Transverse colon (tissue), 4 donors: ENCODE measurements at regions of chr4 and their contacts with region 1.

Region 1: GRCh38 chr4:145481164-145481941 is at the start of gene SMAD1:
- DNase-seq: peak; percentile 86
- H3K4me3 ChIP-seq: peak within 1 kb of the TSS; percentile 80 to 99 (median 94)
- H3K27ac ChIP-seq: peak within 1 kb of the TSS; percentile 94 to 100 (median 98)
- H3K4me1 ChIP-seq: peaks cover 0 to 42% (median 16%) of the 10 kb centered on the region in 4 donors
- H3K27me3 ChIP-seq: no peaks in the 10 kb centered on the region
- CTCF ChIP-seq: no peak
- EP300 ChIP-seq: no peak
- POLR2A ChIP-seq: peak; percentile 77
- total RNA-seq, gene SMAD1: 42.9 to 65.1 (median 46.5) TPM

Region 2: GRCh38 chr4:143711543-143712154 is 1769.7 kb before region 1 on chr4:
- in situ Hi-C with region 1: no loop called
- intact Hi-C with region 1: no loop called
- DNase-seq: no peak
- H3K4me3 ChIP-seq: no peak overlapping the region
- H3K27ac ChIP-seq: no peak overlapping the region
- H3K4me1 ChIP-seq: no peaks in the 10 kb centered on the region
- H3K27me3 ChIP-seq: no peaks in the 10 kb centered on the region
- CTCF ChIP-seq: no peak
- EP300 ChIP-seq: no peak
- POLR2A ChIP-seq: no peak

Region 3: DNA sequence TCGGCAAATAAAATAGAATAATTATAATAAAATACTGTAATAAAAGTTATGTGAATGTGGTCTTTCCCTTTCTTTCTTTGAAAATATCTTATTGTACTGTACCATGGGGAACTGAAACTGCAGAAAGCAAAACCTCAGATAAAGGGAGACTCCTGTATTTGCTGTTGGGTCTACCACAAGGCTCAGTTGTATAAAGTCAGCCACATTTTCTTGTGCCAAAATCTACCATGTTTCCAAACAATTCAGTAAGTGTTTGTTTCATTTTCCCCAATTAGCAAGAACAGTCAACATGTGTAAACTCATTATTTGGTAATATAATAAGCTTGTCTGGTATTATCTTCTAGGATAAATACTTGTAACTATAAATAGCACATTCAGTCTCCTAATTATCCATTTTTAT is 286.2 kb before region 1 on chr4:
- in situ Hi-C with region 1: no loop called
- intact Hi-C with region 1: no loop called
- DNase-seq: no peak
- H3K4me3 ChIP-seq: no peak overlapping the region
- H3K27ac ChIP-seq: no peak overlapping the region
- H3K4me1 ChIP-seq: peaks cover 0 to 4% (median 0%) of the 10 kb centered on the region in 4 donors
- H3K27me3 ChIP-seq: no peaks in the 10 kb centered on the region
- CTCF ChIP-seq: no peak
- EP300 ChIP-seq: no peak
- POLR2A ChIP-seq: no peak

Region 4: DNA sequence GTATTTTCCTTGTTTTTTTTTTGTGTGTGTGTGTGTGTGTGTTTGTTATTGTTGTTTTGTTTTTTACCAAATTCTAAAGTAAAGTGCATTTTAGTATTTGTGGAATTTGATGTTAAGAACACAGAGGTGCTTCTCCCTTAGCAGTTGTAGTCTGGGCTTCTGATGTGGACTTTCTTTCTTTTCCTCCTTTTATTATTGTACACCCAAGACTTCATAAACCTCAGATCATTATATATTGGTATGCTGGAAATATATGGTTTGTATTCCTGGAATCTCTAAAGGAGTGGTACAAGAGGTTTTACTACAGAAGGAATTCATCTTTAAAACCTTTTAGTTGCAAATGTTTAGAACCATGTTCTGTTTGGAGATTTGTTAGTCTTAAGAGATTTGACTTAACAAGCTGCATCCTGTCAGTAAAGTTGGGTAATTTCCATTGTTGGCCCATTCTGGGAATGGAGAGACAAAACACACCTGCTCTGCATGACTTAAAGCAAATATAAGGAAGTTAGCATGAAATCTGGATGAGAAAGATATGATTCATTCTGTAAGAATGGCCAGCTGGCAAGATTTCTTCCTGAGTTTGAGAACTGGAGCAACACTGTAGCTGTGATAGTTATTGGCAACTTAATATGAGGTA is 64.3 kb after region 1 on chr4:
- in situ Hi-C with region 1: no loop called
- intact Hi-C with region 1: loop called (anchors 5 kb)
- DNase-seq: peak; percentile 19
- H3K4me3 ChIP-seq: no peak overlapping the region
- H3K27ac ChIP-seq: peak overlapping the region; percentile 55 to 64 (median 60)
- H3K4me1 ChIP-seq: peaks cover 11 to 24% (median 23%) of the 10 kb centered on the region in 4 donors
- H3K27me3 ChIP-seq: no peaks in the 10 kb centered on the region
- CTCF ChIP-seq: no peak
- EP300 ChIP-seq: no peak
- POLR2A ChIP-seq: no peak

Region 5: DNA sequence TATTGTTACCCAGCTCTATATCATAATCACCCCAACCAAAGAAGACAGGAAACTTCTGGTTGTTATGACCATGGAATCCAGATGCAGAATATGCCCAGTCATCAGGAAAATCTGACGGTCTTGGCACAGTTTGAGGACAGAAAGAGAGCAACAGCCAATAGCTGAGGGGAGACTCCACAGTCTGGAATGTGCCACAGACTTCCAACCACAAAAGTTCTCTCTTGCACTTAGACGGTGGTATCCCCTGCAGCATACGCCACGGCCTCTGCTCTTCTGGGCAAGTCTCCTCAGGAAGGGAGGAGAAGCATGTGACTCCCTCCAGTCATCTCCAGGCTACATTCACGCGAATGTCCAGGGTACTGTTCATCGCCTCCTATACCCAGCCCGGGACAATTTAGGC is 438.9 kb after region 1 on chr4:
- in situ Hi-C with region 1: no loop called
- intact Hi-C with region 1: no loop called
- DNase-seq: no peak
- H3K4me3 ChIP-seq: no peak overlapping the region
- H3K27ac ChIP-seq: peak overlapping the region in 2 of 4 donors; percentile 19 to 31
- H3K4me1 ChIP-seq: peaks cover 0 to 8% (median 0%) of the 10 kb centered on the region in 4 donors
- H3K27me3 ChIP-seq: no peaks in the 10 kb centered on the region
- CTCF ChIP-seq: no peak
- EP300 ChIP-seq: no peak
- POLR2A ChIP-seq: no peak

Region 6: GRCh38 chr4:147060151-147060931 is 1579.0 kb after region 1 on chr4:
- in situ Hi-C with region 1: no loop called
- intact Hi-C with region 1: no loop called
- DNase-seq: no peak
- H3K4me3 ChIP-seq: no peak overlapping the region
- H3K27ac ChIP-seq: no peak overlapping the region
- H3K4me1 ChIP-seq: peaks cover 0 to 6% (median 2%) of the 10 kb centered on the region in 4 donors
- H3K27me3 ChIP-seq: no peaks in the 10 kb centered on the region
- CTCF ChIP-seq: no peak
- EP300 ChIP-seq: no peak
- POLR2A ChIP-seq: no peak